ENCODE measurements at regions of chr1 and their contacts with region 1.

Region 1: DNA sequence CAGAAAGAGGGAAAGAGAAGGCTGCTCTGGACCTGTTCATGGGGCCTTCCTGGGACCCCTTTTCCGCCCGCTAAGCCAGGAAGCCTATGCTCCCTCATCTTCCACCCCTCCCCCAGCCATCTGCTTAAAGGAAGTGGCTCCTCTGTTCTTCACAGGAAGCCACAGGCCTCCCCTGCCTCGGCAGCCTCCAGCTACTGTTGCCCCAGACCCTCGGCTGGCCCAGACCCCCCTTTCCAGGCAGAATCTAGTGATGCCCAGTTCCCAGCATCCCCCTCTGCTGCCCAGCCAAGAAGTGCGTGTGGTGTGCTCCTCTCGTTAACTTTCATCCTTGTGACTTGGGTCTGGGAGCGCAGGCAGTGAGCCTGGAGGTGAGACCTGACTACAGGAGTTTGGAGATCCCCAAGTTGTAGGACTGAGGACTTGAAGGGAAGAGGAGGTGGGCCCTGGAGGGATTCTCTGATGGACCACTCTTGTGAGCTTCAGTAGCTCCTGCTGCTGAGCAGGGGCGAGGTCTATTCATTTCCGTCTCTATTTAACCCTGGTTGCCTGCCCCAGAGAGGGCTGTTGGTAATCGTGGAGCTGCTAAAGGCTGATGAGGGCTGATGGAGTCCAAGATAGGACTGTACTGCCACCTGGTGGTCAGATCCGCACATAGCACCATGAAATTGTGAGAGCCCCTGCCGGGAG is 9.1 kb downstream of the IFI6 start:
- DNase-seq: peak; percentile 83
- H3K4me3 ChIP-seq: no peak overlapping the region
- H3K27ac ChIP-seq: no peak overlapping the region
- H3K4me1 ChIP-seq: peaks cover 14% of the 10 kb centered on the region
- H3K27me3 ChIP-seq: no peaks in the 10 kb centered on the region
- CTCF ChIP-seq: peak; percentile 80 to 85
- POLR2A ChIP-seq: no peak

Region 2: GRCh38 chr1:27616441-27616840 is 46.4 kb before region 1 on chr1:
- CTCF ChIA-PET with region 1: interaction called, 306 read pairs
- POLR2A ChIA-PET with region 1: no interaction called
- dilution Hi-C with region 1: no loop called
- intact Hi-C with region 1: no loop called
- DNase-seq: no peak
- H3K4me3 ChIP-seq: no peak overlapping the region
- H3K27ac ChIP-seq: no peak overlapping the region
- H3K4me1 ChIP-seq: peaks cover 28% of the 10 kb centered on the region
- H3K27me3 ChIP-seq: no peaks in the 10 kb centered on the region
- CTCF ChIP-seq: peak in 1 of 2 donors; percentile 24
- POLR2A ChIP-seq: no peak

Region 3: GRCh38 chr1:27643701-27644625 is 18.9 kb before region 1 on chr1:
- CTCF ChIA-PET with region 1: interaction called, 19 read pairs
- POLR2A ChIA-PET with region 1: no interaction called
- dilution Hi-C with region 1: no loop called
- intact Hi-C with region 1: loop called (anchors 1 kb)
- DNase-seq: peak; percentile 54
- H3K4me3 ChIP-seq: no peak overlapping the region
- H3K27ac ChIP-seq: no peak overlapping the region
- H3K4me1 ChIP-seq: no peaks in the 10 kb centered on the region
- H3K27me3 ChIP-seq: no peaks in the 10 kb centered on the region
- CTCF ChIP-seq: peak; percentile 74 to 86
- POLR2A ChIP-seq: no peak

Region 4: DNA sequence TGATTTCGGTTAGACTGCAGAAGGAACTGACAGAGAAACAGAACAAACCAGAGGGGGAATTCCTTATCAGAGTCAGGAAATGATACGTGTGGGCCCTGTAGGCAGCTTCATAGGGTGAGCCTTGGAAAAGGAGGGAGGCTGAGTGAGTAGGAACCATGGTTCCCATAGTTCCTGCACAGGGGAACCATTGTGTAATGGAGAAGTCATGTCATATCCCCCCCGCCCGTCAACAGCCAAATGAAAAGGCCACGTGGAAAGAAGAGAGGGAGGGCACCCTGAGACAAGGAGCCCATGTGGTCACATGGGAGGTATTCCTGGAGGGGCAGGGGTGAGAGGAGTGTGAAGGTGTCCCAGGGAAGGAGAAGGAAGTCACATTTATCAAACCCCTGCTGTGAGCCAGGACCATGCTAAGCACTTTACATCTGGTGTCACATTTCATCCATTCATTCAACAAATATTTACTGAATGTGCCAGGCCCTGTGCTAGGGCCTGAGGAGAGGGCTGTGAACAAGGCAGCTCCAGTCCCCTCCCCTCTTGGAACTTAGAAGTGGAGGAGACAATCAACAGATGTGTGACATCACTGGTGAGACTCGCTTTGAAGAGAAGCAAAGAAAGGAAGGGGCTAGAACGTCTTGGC is 12.2 kb before region 1 on chr1:
- CTCF ChIA-PET with region 1: interaction called, 19 read pairs
- POLR2A ChIA-PET with region 1: no interaction called
- dilution Hi-C with region 1: no loop called
- intact Hi-C with region 1: no loop called
- DNase-seq: peak; percentile 31
- H3K4me3 ChIP-seq: no peak overlapping the region
- H3K27ac ChIP-seq: no peak overlapping the region
- H3K4me1 ChIP-seq: no peaks in the 10 kb centered on the region
- H3K27me3 ChIP-seq: no peaks in the 10 kb centered on the region
- CTCF ChIP-seq: no peak
- POLR2A ChIP-seq: no peak

Region 5: GRCh38 chr1:27704958-27705357 is 42.1 kb after region 1 on chr1:
- CTCF ChIA-PET with region 1: no interaction called
- POLR2A ChIA-PET with region 1: no interaction called
- dilution Hi-C with region 1: no loop called
- intact Hi-C with region 1: no loop called
- DNase-seq: no peak
- H3K4me3 ChIP-seq: no peak overlapping the region
- H3K27ac ChIP-seq: no peak overlapping the region
- H3K4me1 ChIP-seq: no peaks in the 10 kb centered on the region
- H3K27me3 ChIP-seq: peaks cover 3 to 9% of the 10 kb centered on the region in 2 experiments
- CTCF ChIP-seq: no peak
- POLR2A ChIP-seq: no peak

Measured in endothelial cell of umbilical vein (primary cell).